Colonic mucosa (tissue), 4 donors: ENCODE measurements at regions of chr6 and their contacts with region 1.

Region 1: DNA sequence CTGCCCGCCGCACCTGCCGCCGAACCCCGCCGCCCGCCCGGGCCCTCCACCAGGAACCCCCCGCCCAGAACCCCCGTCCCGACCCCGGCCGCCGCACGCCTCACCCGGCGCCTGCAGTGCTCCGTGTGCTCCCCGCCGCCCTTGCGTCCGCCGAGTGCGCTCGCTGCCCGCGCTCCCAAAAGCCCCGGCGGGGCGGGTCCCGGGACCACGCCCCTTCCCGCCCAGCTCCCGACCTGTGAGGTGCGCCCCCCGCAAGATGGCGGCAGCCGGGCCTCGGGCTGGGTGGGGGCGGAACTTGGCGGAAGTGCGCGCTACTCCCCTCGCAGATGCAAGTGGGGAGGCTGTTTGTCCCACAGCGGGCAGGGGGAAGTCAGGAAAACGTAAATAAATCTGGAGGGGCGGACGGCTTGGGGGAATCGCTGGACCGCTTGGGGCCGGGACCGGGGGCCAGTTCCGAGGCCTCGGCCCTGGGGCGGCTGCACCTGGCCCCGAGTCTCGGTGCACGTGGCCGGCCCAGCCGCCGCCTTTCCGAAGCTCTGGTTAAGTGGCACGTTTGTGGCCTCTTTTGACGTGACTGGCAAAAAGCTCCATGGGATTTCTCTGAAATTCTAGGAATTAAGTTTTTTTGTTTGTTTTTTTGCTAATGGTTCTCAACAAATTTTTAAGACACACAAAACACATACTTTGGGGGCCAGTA is at the start of gene EZR:
- DNase-seq: peak; percentile 87
- H3K4me3 ChIP-seq: peak within 1 kb of the TSS; percentile 77
- H3K27ac ChIP-seq: peak within 1 kb of the TSS; percentile 97
- H3K4me1 ChIP-seq: no peaks in the 10 kb centered on the region
- H3K27me3 ChIP-seq: no peaks in the 10 kb centered on the region
- CTCF ChIP-seq: no peak
- total RNA-seq, gene EZR: 257 to 424 TPM

Region 2: DNA sequence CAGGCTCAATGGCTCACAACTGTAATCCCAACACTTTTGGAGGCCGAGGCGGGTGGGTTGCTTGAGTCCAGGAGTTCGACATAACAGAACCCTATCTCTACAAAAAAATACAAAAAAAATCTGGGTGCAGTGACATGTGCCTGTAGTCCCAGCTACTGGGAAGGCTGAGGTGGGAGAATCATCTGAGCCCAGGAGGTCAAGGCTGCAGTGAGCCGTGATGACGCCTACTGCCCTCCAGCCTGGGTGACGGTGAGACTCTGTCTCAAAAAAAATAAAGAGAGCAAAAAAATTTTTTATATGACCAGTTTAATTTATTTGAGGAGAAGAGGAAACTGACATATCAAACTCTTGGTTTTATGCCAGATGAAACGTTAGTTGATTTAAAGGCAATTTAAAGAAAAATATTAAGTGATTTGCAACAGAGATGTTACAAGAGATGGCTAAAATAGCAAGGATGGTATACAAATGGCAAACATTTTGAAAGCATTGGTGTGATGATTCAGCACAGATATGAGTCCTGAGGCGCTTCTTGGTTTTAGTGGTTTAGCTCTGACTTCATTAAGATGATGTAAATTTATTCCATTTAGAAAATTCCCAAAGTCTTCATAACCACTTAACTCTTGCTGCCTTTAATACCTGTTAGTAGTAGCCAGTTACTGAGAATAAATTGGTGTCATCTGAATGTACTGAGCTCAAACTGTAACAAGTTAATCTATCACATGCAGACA is 633.5 kb before region 1 on chr6:
- intact Hi-C with region 1: no loop called
- DNase-seq: no peak
- H3K4me3 ChIP-seq: no peak overlapping the region
- H3K27ac ChIP-seq: no peak overlapping the region
- H3K4me1 ChIP-seq: no peaks in the 10 kb centered on the region
- H3K27me3 ChIP-seq: no peaks in the 10 kb centered on the region
- CTCF ChIP-seq: no peak

Region 3: DNA sequence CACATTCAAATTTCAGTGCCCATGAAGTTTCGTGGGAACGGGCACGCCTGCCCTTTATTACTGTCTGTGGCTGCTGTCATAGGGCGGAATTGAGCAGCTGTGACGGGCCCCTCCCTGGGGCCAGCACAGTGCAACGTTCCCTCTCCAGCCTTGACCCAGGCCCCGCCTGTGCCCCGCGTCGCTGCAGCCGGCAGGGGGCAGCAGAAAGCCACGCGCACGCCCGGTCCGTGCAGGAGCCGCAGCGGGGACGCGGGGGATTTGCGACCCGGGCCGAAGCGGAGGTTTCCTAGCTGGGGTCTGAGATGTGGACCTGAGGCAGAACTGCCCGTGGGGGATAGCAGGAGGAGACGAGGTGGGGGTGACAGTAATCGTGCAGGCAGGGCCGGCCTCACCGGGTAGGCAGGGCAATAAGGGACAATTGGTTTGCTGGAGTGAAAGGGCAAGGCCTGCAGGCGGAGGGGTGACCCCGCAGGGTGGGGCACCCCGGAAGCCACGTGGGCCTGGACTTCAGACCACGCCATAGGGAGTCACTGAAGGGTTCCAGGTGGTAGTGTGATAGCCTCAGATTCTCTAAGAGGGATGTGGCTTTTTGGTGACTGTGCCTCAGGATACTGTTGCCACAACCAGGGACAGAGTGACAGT is 115.1 kb before region 1 on chr6:
- intact Hi-C with region 1: loop called (anchors 10 kb)
- DNase-seq: peak; percentile 91
- H3K4me3 ChIP-seq: peak overlapping the region; percentile 38
- H3K27ac ChIP-seq: peak overlapping the region; percentile 47
- H3K4me1 ChIP-seq: peaks cover 8% of the 10 kb centered on the region
- H3K27me3 ChIP-seq: no peaks in the 10 kb centered on the region
- CTCF ChIP-seq: peak; percentile 99